Left cardiac atrium (tissue), 4 donors: ENCODE measurements at regions of chr12 and their contacts with region 1.

Region 1: GRCh38 chr12:50174971-50175715 is 8.0 kb upstream of the CERS5 start:
- DNase-seq: no peak
- ATAC-seq: no peak

Region 2: DNA sequence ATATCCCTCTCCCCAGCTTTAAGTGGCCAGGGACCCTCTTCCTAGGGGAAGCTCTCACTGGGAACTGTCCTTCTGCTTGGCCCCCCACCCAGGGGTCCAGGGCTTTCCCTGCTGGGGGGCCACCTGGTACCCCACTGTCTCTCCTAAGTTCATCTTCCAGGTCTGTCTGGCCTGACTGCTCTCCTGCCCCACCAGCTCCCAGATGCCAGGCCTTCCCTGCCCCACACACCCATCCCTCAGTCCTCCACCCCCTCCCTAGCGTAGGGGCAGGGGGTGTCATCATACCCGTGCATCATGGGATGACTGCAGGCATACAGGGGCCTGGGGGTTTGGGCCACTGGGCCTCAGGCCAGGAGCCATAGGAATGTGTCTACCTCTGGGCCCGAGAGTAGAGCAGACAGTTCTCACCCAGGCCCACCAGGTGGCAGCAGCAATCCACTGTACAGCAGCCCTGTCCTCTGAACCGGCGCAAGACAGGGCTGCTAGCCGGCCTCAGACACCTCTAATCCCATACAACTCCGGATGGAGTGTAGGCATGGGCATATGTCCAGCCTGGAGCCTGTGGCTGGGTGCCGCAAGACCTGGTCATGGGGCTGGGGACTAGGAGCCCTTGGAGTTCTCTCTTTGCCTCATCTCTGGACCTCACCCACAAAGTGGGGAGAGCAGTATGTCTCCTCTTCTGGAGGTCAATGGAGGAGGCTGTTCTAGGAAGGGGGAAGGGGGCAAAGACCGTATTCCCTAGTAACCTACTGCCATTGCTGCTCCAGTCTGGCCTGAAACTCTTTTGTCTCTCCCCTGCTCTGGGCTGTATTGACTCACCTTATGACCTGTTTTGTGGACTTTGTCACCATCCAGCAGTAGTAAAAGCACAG is 100.0 kb before region 1 on chr12:
- intact Hi-C with region 1: loop called (anchors 1 to 5 kb)
- DNase-seq: peak; percentile 86
- ATAC-seq: peak; percentile 89 to 90

Region 3: GRCh38 chr12:50257686-50258551 is 82.8 kb after region 1 on chr12:
- intact Hi-C with region 1: no loop called
- DNase-seq: peak; percentile 42
- ATAC-seq: peak; percentile 78 to 87